Mammary epithelial cell (primary cell): ENCODE measurements at regions of chr18 and their contacts with region 1.

Region 1: DNA sequence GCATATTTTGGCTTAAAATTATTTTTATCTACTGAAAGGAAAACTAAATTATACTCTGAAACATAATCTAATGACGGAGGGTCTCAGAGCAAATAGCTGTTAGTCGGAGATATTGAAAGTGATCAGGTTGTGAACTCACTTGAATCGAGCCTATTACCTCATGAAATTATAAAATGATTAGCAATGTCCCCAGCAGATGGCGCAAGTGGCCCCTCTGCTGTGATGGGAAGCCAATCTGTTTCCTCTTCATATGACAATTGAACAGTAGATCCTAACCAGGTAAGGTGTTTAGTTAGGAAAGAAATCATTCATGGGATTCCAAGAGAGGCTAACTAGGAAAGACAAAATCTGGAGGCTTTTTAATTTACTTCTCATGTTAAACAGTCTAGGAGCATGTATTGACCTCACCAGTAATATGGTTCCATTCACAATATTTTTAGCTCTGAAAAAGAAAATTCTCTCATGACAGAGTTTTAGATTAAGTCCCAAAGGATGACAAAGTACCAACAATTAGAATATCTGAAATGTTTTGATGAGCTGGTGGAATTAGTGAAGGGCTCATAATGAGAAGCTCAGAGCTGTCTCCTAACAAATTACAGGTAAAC is 29.9 kb upstream of the MPPE1 start:
- DNase-seq: peak; percentile 47
- H3K4me3 ChIP-seq: no peak overlapping the region
- H3K27ac ChIP-seq: no peak overlapping the region
- H3K4me1 ChIP-seq: no peaks in the 10 kb centered on the region
- H3K27me3 ChIP-seq: no peaks in the 10 kb centered on the region
- CTCF ChIP-seq: peak; percentile 70 to 83

Region 2: DNA sequence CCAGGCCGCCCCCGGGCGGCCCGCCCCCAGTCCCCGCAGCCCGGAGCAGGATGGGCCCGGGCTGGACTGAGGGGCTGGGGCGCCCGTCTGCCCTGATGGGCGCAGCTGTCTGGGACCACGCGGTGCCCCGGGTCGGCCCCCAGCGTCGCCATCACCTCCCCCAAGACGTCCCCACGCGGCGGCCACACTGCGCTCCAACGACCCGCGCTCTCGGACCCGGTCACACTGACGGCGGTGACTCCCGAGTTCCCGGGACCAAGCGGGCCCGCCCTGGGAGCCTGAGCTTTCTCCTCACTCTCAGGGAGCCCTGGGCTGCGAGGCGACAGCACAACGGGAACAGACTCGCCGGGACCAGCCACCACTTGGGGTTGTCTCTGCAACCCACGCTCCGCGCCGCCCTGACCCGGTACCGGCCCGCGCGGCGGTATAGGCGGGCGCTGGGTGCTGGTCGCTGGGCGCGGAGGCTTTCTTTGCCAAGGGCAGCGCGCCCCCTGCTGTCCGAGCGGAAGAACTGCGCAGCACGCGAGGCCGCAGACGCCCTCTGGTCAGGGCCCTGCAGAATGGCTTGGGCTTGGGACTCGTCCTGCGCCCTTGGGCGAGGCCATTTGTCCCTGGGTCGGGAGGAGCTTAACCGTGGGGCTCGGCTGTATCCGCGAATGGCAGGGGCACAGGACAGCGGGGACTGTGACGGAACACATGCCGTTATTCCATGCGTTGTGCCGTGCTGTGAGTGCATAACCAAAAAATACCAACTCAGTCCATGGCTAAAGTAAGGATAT is 100.9 kb after region 1 on chr18:
- CTCF ChIA-PET with region 1: interaction called, 15 read pairs
- dilution Hi-C with region 1: no loop called
- in situ Hi-C with region 1: loop called (anchors 5 to 10 kb)
- intact Hi-C with region 1: loop called (anchors 1 kb)
- DNase-seq: peak; percentile 61
- H3K4me3 ChIP-seq: peak overlapping the region; percentile 33 to 53 (median 41)
- H3K27ac ChIP-seq: peak overlapping the region; percentile 22
- H3K4me1 ChIP-seq: peaks cover 20% of the 10 kb centered on the region
- H3K27me3 ChIP-seq: no peaks in the 10 kb centered on the region
- CTCF ChIP-seq: peak; percentile 73 to 93

Region 3: DNA sequence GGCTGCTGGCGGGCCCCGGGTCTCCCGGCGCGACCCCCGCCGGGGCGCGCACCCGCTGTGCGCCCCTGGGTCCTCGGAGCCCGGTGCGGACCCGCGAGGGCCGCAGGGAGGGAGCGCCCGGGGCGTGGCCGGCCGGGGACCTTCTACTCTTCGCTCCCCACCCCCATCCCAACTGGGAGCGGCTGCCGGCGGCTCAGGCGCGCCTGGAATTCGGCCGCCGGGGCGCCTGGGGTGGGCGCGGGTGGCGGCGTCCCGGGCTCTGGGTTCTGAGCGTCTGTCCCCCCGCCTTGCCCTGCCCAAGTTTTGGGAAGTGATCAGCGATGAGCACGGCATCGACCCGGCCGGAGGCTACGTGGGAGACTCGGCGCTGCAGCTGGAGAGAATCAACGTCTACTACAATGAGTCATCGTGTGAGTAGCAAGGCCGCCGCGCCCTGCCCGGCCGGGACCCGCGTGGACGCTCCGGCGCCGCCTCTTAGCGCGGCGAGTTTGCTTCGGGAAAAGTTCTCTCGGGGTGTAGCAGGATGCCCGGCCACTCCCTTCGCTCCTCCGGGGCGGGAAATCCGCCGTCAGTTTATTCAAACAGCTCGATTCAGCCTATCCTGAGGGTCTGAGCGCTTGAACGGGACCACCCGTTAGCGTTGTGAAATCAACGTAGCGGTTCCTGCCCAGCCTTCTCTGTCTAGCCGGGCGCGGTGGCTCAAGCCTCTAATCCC is 370.6 kb after region 1 on chr18:
- CTCF ChIA-PET with region 1: no interaction called
- dilution Hi-C with region 1: no loop called
- in situ Hi-C with region 1: no loop called
- intact Hi-C with region 1: no loop called
- DNase-seq: peak; percentile 79
- H3K4me3 ChIP-seq: peak overlapping the region; percentile 54 to 91 (median 71)
- H3K27ac ChIP-seq: peak overlapping the region; percentile 88
- H3K4me1 ChIP-seq: peaks cover 34% of the 10 kb centered on the region
- H3K27me3 ChIP-seq: no peaks in the 10 kb centered on the region
- CTCF ChIP-seq: no peak